ENCODE measurements at regions of chr7 and their contacts with region 1.

Region 1: DNA sequence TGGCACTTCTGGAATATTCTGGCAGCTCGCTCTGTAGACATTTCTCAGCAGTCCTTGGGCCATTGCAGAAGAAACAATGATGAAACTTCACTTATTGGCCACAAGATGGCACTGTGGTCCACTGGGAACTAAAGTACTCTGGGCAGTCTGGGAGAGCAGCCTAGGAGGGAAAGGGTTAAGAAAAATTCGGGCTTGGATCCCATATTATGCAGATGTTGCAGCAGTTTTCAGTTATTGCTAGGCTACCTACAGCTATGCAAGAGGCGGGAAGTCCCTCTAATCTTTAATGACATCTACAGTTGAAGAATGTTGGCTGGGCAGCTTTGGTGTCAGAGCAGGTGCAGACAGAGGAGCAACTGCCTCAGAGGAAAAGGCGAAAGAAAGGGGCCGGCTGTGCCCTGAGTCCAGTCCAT is 201.7 kb upstream of the PRSS58 start:
- DNase-seq: peak; percentile 52
- H3K4me3 Mint-ChIP-seq: no peak overlapping the region
- H3K27ac Mint-ChIP-seq: no peak overlapping the region
- H3K4me1 Mint-ChIP-seq: peaks cover 66% of the 10 kb centered on the region
- H3K27me3 Mint-ChIP-seq: peaks cover 9% of the 10 kb centered on the region

Region 2: DNA sequence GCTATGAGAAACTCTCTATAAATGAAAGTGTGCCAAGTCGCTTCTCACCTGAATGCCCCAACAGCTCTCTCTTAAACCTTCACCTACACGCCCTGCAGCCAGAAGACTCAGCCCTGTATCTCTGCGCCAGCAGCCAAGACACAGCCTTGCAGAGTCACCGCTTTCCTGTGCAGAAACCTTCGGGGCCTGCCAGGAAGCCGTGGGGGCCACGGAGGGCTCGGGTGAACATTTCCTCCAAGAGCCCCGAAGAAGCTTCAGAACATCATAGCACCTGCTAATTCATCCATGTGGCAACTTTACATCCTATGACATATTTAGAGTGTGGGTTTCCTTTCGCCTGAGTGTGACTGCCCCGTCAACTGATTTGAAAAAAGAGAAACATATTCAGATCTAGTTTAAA is 146.0 kb before region 1 on chr7:
- CTCF ChIA-PET with region 1: no interaction called
- DNase-seq: peak; percentile 38
- H3K4me3 Mint-ChIP-seq: peak overlapping the region; percentile 25
- H3K27ac Mint-ChIP-seq: peak overlapping the region; percentile 13
- H3K4me1 Mint-ChIP-seq: peaks cover 17% of the 10 kb centered on the region
- H3K27me3 Mint-ChIP-seq: peaks cover 40% of the 10 kb centered on the region

Region 3: DNA sequence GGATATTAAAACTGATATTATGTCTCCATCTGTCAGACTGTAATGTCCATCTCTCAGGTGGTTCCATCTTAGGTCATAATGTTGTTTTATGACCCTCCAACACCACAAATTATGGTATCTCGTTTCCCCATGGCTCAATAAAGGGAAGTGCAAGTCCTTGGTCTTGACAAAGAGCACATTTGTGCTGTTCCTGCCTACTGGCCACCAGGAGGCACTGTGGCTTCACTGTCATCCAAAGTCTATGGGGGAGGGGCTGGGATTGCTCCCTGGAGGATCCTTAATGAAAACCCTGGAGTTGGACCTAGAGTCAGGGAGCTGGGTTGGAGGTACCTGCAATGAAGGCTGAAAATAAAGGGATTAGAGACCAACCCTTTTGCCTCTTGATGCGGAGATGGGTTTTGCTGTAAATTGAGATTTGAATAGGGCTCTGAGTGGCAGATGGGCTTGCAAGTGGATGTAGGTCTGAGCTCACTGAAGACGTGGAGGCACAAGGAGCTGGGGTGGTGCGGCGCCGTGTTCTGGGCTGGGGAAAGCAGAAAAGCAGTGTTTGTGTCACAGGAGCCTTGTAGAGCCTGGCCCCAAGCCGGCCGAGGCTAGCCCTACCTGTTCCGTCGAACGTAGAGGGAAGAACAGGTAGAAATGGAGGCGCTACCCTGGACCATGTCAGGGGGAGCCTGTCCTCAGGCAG is 21.2 kb before region 1 on chr7:
- CTCF ChIA-PET with region 1: interaction called, 40 read pairs
- DNase-seq: peak; percentile 58
- H3K4me3 Mint-ChIP-seq: no peak overlapping the region
- H3K27ac Mint-ChIP-seq: no peak overlapping the region
- H3K4me1 Mint-ChIP-seq: peaks cover 60% of the 10 kb centered on the region
- H3K27me3 Mint-ChIP-seq: peaks cover 6% of the 10 kb centered on the region

Region 4: GRCh38 chr7:142445019-142445686 is 14.4 kb before region 1 on chr7:
- CTCF ChIA-PET with region 1: interaction called, 40 read pairs
- DNase-seq: peak; percentile 63
- H3K4me3 Mint-ChIP-seq: no peak overlapping the region
- H3K27ac Mint-ChIP-seq: peak overlapping the region; percentile 62
- H3K4me1 Mint-ChIP-seq: peaks cover 34% of the 10 kb centered on the region
- H3K27me3 Mint-ChIP-seq: peaks cover 5% of the 10 kb centered on the region

Region 5: DNA sequence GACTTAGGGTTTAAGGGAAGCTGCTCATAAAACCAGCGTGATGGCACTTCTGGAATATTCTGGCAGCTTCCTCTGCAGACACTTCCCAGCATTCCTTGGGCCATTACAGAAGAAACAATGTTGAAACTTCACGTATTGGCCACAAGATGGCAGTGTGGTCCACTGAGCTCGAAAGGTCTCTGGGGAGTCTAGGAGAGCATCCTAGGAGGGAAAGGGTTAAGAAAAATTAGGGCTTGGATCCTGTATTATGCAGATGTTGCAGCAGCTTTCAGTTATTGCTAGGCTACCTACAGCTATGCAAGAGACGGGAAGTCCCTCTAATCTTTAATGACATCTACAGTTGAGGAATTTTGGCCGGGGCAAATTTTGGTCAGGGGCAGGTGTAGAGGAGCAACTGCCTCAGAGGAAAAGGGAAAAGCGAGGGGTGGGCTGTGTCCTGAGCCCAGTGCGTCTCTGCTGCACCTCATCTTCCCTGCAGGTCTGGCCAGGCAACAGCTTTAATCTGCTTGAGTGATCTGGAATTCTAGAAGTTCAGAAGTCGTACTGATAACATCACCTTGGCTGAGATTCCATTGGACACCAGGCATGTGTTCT is 19.0 kb after region 1 on chr7:
- CTCF ChIA-PET with region 1: interaction called, 523 read pairs
- DNase-seq: peak; percentile 44
- H3K4me3 Mint-ChIP-seq: peak overlapping the region; percentile 28
- H3K27ac Mint-ChIP-seq: peak overlapping the region; percentile 17
- H3K4me1 Mint-ChIP-seq: peaks cover 75% of the 10 kb centered on the region
- H3K27me3 Mint-ChIP-seq: peaks cover 6% of the 10 kb centered on the region

Region 6: DNA sequence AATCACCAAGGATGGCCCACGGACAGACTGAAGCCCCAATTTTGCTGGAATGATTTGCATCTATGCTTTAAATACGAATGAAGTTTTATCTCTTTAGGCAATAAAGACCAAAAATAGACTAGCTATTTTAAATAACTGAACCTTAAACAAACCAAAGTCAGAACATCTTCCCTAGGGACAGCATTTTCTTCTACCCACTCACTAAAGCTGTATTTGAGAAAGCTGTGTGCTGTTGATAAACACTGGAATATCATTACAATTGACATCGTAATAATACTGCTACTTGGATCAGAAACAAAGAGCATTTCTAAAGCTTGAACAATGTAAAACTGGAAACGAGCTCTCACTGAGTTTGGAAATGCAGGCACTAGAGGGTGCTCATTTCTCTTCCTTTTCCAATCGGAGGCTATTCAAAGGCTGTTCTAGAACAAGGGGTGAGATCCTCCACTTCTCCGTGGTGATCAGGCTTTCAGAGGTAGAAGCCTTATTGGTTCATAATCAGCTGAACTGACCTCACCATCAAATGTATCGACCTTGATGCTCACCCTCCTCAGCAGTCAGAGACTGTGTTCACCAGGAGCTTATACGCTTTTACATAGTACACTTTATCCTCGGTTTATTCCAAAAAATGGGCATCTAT is 64.4 kb after region 1 on chr7:
- CTCF ChIA-PET with region 1: interaction called, 14 read pairs
- DNase-seq: no peak
- H3K4me3 Mint-ChIP-seq: no peak overlapping the region
- H3K27ac Mint-ChIP-seq: no peak overlapping the region
- H3K4me1 Mint-ChIP-seq: peaks cover 25% of the 10 kb centered on the region
- H3K27me3 Mint-ChIP-seq: peaks cover 24% of the 10 kb centered on the region